ENCODE measurements at regions of chr1 and their contacts with region 1.

Region 1: DNA sequence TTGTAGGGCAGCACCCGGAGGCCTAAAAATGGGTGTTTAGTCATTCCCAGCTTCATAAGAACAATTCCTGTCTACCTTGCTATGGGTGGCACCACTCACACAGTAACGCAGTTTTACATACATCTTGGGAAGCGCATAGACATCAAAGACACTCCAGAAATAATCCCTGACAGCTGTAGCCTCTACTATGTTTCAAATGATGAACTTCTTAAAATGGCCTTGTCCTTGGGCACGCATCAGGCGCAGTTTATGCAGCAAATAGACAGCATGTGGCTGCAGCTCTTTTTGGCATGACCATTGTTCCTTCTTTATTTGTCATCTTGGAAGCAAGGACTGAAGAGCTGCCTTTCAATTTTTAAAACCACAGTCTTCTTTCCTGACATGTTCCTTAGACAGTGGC is 77.6 kb upstream of the CACYBP start:
- DNase-seq: no peak
- ATAC-seq: no peak
- H3K4me3 ChIP-seq: no peak overlapping the region
- H3K27ac ChIP-seq: no peak overlapping the region
- H3K4me1 ChIP-seq: no peaks in the 10 kb centered on the region
- H3K27me3 ChIP-seq: no peaks in the 10 kb centered on the region
- CTCF ChIP-seq: no peak
- POLR2A ChIP-seq: no peak

Region 2: GRCh38 chr1:174982971-174983689 is 61.0 kb after region 1 on chr1:
- in situ Hi-C with region 1: loop called in 1 of 4 experiments (anchors 10 kb)
- intact Hi-C with region 1: no loop called
- DNase-seq: no peak
- ATAC-seq: no peak
- H3K4me3 ChIP-seq: no peak overlapping the region
- H3K27ac ChIP-seq: no peak overlapping the region
- H3K4me1 ChIP-seq: no peaks in the 10 kb centered on the region
- H3K27me3 ChIP-seq: no peaks in the 10 kb centered on the region
- CTCF ChIP-seq: peak; percentile 44 to 65 (median 58)
- POLR2A ChIP-seq: no peak

Region 3: GRCh38 chr1:175099916-175100315 is 177.8 kb after region 1 on chr1:
- in situ Hi-C with region 1: no loop called
- intact Hi-C with region 1: no loop called
- DNase-seq: no peak
- ATAC-seq: no peak
- H3K4me3 ChIP-seq: no peak overlapping the region
- H3K27ac ChIP-seq: no peak overlapping the region
- H3K4me1 ChIP-seq: no peaks in the 10 kb centered on the region
- H3K27me3 ChIP-seq: no peaks in the 10 kb centered on the region
- CTCF ChIP-seq: no peak
- POLR2A ChIP-seq: no peak